ENCODE measurements at regions of chr3 and their contacts with region 1.

Region 1: GRCh38 chr3:119463171-119464169 is at the start of gene TMEM39A:
- DNase-seq: peak; percentile 99
- ATAC-seq: peak; percentile 87
- H3K4me3 ChIP-seq: peak within 1 kb of the TSS; percentile 76 to 99 (median 85)
- H3K4me3 Mint-ChIP-seq: peak within 1 kb of the TSS; percentile 96
- H3K27ac ChIP-seq: peak within 1 kb of the TSS; percentile 68 to 88
- H3K27ac Mint-ChIP-seq: peak within 1 kb of the TSS; percentile 99
- H3K4me1 ChIP-seq: peaks cover 24 to 25% of the 10 kb centered on the region in 2 donors
- H3K4me1 Mint-ChIP-seq: peaks cover 37% of the 10 kb centered on the region
- H3K27me3 ChIP-seq: no peaks in the 10 kb centered on the region
- H3K27me3 Mint-ChIP-seq: no peaks in the 10 kb centered on the region
- CTCF ChIP-seq: no peak
- total RNA-seq, gene TMEM39A: 39.9 and 50.3 TPM in 2 replicates

Region 2: GRCh38 chr3:119279101-119279554 is 184.3 kb before region 1 on chr3:
- CTCF ChIA-PET with region 1: interaction called, 8 read pairs
- POLR2A ChIA-PET with region 1: no interaction called
- intact Hi-C with region 1: loop called (anchors 2 kb)
- DNase-seq: no peak
- ATAC-seq: no peak
- H3K4me3 ChIP-seq: no peak overlapping the region
- H3K4me3 Mint-ChIP-seq: no peak overlapping the region
- H3K27ac ChIP-seq: no peak overlapping the region
- H3K27ac Mint-ChIP-seq: no peak overlapping the region
- H3K4me1 ChIP-seq: no peaks in the 10 kb centered on the region
- H3K4me1 Mint-ChIP-seq: no peaks in the 10 kb centered on the region
- H3K27me3 ChIP-seq: no peaks in the 10 kb centered on the region
- H3K27me3 Mint-ChIP-seq: no peaks in the 10 kb centered on the region
- CTCF ChIP-seq: no peak

Region 3: GRCh38 chr3:119579366-119580165 is 116.1 kb after region 1 on chr3 and contains the start of gene ADPRH:
- CTCF ChIA-PET with region 1: no interaction called
- POLR2A ChIA-PET with region 1: no interaction called
- intact Hi-C with region 1: loop called (anchors 5 kb)
- DNase-seq: peak; percentile 81
- ATAC-seq: peak; percentile 76
- H3K4me3 ChIP-seq: peak within 1 kb of the TSS; percentile 64 to 94 (median 78)
- H3K4me3 Mint-ChIP-seq: peak within 1 kb of the TSS; percentile 99
- H3K27ac ChIP-seq: peak within 1 kb of the TSS; percentile 94 to 98
- H3K27ac Mint-ChIP-seq: peak within 1 kb of the TSS; percentile 100
- H3K4me1 ChIP-seq: peaks cover 12 to 19% of the 10 kb centered on the region in 2 donors
- H3K4me1 Mint-ChIP-seq: peaks cover 30% of the 10 kb centered on the region
- H3K27me3 ChIP-seq: no peaks in the 10 kb centered on the region
- H3K27me3 Mint-ChIP-seq: no peaks in the 10 kb centered on the region
- CTCF ChIP-seq: no peak
- total RNA-seq, gene ADPRH: 18.8 and 24.5 TPM in 2 replicates